RWPE1 (cell line): ENCODE measurements at regions of chr12 and their contacts with region 1.

Region 1: DNA sequence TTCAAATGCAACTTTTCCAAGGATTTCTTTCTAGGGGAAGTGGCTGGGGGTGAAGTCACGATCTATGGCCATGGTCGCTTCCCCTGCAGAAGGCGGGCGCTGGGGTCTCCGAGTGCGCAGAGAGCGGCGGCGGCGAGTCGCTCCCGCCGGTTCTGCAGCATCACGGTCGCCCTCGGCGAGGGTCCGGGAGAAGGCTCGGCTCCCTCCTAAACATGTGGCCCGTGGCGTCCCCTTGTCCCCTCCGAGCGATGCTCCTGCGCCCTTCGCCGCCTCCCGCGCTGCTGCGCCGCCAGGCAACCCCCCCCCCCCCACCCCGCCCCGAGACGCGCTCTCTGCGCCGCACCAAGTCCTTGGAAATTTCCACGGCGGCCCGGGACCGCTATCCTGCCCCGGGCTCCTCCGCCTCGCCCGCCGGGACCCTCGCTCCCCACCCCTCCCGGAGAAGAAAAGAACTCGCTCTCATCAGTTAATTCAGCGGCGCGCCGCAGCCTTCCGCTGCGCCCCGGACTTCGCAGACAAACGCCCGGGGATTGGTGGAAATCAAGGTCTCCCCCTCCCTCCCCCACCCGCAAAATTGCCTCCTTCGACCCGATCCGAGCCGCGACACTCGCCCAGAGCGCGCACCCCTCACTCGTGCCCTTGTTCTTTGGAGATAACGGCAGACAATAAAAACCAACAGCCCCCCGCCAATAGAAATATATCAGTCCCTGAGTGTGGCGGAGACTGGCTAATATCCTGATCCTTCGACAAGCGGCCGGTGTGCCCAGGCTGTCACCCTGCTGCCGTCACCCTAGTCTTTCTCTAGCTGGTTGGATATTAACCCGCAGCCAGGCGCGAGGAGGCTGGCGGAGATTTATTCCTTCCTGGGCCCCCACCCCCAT is at the start of gene ST8SIA1:
- DNase-seq: peak; percentile 42
- H3K27ac ChIP-seq: peak within 1 kb of the TSS; percentile 64
- CTCF ChIP-seq: no peak

Region 2: DNA sequence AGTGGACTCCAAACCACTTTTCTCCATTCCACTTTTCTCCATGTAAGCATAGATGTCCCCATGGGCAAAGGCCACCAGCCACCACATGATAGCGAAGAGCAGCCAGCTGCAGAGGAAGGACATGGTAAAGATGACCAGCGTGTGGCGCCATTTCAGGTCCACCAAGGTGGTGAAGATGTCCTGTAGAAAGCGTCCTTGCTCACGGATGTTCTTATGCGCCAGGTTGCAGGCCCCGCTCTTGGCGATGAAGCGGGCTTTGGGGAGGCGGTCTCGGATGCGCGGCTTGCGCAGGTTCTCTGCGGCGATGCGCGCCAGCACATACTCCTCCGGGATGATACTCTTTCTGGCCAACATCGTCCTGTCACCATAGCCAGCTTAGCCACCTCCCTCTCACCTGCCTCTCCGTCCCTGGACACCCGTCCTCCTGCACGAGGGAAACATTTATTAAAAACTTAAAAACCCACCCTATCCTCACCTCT is 561.3 kb before region 1 on chr12:
- CTCF ChIA-PET with region 1: no interaction called
- POLR2A ChIA-PET with region 1: no interaction called
- DNase-seq: no peak
- H3K27ac ChIP-seq: no peak overlapping the region
- CTCF ChIP-seq: no peak

Region 3: GRCh38 chr12:22083167-22083566 is 251.5 kb before region 1 on chr12:
- CTCF ChIA-PET with region 1: interaction called, 11 read pairs
- POLR2A ChIA-PET with region 1: no interaction called
- DNase-seq: peak; percentile 17
- H3K27ac ChIP-seq: no peak overlapping the region
- CTCF ChIP-seq: no peak; the same call in 1 of the 2 replicates

Region 4: DNA sequence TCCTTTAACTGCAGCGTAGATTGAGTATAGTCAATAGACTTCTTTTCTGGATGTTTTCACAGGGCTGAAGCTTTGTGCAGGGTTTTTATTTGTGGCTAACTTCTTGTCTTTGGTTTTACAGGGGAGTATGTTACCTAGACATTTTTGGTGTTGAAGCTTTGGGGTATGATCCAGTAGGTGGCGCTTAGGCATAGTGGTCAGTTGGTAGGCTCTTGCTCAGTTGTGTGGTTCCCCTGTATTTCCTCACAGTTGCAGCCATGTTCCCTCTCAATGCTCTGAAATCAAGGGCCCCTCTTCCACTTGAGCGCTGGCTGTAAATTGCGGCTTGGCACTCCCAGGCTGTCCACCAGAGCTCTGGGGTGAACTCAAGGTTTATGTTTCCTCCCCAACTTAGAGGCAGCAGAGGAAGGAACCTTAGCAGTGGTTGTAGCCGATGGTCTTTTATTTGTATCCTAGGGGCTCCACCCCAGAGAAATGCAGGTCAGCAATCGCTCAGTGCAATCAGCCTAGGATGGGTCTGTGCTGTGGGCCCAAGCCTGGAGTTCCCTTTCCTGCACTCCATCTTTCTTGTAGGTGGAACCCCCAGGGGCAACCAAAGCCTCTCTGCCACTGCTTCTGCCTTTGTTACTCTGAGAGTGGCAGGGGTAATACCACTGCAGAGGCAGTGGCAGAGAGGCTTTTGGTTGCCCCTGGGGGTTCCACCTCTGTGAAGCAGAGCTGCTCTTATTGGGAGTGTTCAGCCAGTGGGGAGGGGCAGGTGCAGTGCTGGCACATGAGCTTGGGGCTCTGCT is 233.5 kb before region 1 on chr12:
- CTCF ChIA-PET with region 1: interaction called, 14 read pairs
- POLR2A ChIA-PET with region 1: no interaction called
- DNase-seq: no peak
- H3K27ac ChIP-seq: peak overlapping the region; percentile 74
- CTCF ChIP-seq: no peak

Region 5: GRCh38 chr12:22312336-22312735 is 22.3 kb before region 1 on chr12:
- CTCF ChIA-PET with region 1: no interaction called
- POLR2A ChIA-PET with region 1: no interaction called
- DNase-seq: peak; percentile 7
- H3K27ac ChIP-seq: no peak overlapping the region
- CTCF ChIP-seq: no peak

Region 6: DNA sequence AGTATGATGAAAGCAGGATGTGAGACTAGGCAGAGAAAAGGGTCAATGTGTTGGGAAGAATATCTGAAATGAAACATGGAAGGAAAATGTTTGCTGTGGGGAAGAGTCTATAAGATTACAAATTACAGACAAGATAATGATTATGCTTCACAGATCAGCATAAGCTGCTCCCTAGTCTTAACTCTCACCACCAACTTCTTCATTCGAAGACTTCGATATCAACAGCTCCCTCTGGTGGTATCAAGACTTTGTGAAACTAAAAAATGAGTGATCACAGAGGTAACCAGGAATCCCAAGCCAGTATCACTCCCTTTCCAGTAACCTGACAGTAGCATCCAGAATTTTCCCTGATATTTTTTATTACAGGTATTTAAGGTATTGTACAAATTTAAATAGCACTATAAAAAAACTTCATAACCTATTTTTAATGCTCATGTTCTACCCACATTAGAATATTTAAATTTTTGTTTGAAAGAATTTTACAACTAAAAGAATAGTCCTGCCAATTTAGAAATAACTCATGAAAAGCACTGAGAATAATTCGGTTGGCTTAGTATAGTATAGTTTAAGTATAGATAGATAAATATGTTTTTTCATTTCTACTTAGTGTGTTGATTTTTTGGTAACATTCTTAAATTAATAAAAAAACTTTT is 125.3 kb after region 1 on chr12:
- CTCF ChIA-PET with region 1: interaction called, 16 read pairs
- POLR2A ChIA-PET with region 1: no interaction called
- DNase-seq: peak; percentile 24
- H3K27ac ChIP-seq: no peak overlapping the region
- CTCF ChIP-seq: peak; percentile 36